ENCODE measurements at regions of chr3 and their contacts with region 1.

Region 1: GRCh38 chr3:86969500-86970189 is 21.3 kb downstream of the VGLL3 start:
- DNase-seq: no peak
- ATAC-seq: no peak
- H3K4me3 ChIP-seq: no peak overlapping the region
- H3K27ac ChIP-seq: no peak overlapping the region
- H3K4me1 ChIP-seq: peaks cover 0 to 4% (median 0%) of the 10 kb centered on the region in 12 donors
- H3K27me3 ChIP-seq: no peaks in the 10 kb centered on the region
- CTCF ChIP-seq: peak; percentile 21 to 57 (median 44)
- POLR2A ChIP-seq: no peak

Region 2: DNA sequence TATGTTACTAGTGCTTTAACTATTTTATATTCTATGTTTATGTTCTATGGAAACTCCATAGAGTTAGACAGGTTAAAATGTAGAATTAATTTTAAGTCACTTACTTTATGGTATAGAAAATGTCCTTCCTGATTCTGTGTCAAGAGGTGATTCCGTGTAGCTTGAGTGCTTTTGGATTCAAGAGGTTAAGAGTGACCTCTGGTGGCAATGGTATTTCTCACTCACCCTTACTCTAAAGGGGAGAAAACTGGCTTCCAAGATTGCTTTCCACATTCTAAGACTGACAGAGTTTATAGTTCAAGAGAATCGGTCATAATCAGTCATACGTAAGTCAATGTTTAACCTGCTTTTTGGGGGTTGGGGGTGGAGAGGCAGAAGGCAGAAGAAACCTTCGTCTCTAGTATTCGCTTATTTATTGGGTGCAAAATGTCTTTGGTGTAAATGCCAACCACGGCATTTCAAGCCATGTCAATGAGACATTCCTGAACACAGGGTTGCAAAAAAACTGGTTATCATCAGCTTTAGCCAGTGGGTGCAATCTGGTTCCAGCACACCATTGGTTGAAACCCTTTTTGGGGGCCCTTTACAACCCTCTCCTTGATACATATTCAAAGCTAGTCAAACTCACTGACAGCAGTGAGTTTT is 113.3 kb after region 1 on chr3:
- intact Hi-C with region 1: loop called in 1 of 10 experiments (anchors 5 kb)
- DNase-seq: no peak
- ATAC-seq: peak in 3 of 4 donors; percentile 57 to 71 (median 58)
- H3K4me3 ChIP-seq: no peak overlapping the region
- H3K27ac ChIP-seq: no peak overlapping the region
- H3K4me1 ChIP-seq: no peaks in the 10 kb centered on the region
- H3K27me3 ChIP-seq: no peaks in the 10 kb centered on the region
- CTCF ChIP-seq: peak; percentile 20 to 64 (median 42)
- POLR2A ChIP-seq: no peak

Region 3: GRCh38 chr3:87167628-87168456 is 198.2 kb after region 1 on chr3:
- intact Hi-C with region 1: loop called in 1 of 10 experiments (anchors 10 kb)
- DNase-seq: no peak
- ATAC-seq: no peak
- H3K4me3 ChIP-seq: peak overlapping the region in 9 of 12 donors; percentile 26 to 46 (median 35)
- H3K27ac ChIP-seq: no peak overlapping the region
- H3K4me1 ChIP-seq: peaks cover 0 to 5% (median 0%) of the 10 kb centered on the region in 12 donors
- H3K27me3 ChIP-seq: peaks cover 0 to 5% (median 0%) of the 10 kb centered on the region in 9 donors
- CTCF ChIP-seq: peak; percentile 40 to 73 (median 62)
- POLR2A ChIP-seq: no peak

Region 4: DNA sequence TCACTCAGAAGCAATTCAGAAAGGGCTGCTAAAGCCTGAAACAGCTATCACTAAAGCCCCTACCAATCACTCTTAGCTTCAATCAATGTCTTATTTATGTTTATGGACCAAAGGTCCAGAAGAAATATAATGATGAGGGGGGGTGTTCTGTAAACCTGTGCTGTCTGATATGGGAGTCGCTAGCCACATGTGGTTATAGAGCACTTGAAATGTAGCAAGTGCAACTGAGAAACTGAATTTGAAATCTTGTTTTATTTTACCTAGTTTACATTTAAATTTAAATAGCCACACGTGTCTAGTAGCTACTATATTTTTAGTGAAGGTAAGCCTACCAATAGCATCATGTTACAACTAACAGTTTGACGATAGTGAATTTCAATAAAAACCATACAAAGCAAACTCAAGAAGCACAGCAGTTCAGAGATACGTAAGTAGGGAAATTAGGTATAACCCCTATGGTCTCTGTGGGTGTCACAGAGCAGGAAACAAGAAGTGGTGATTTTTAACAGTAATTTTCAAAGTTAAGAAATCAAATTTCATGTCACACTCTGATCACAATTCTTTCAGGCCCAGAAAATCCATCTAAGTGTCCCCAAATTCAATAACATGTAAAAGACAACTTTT is 303.2 kb after region 1 on chr3:
- intact Hi-C with region 1: no loop called
- DNase-seq: no peak
- ATAC-seq: no peak
- H3K4me3 ChIP-seq: no peak overlapping the region
- H3K27ac ChIP-seq: no peak overlapping the region
- H3K4me1 ChIP-seq: peaks cover 0 to 9% (median 0%) of the 10 kb centered on the region in 12 donors
- H3K27me3 ChIP-seq: no peaks in the 10 kb centered on the region
- CTCF ChIP-seq: no peak
- POLR2A ChIP-seq: no peak

Measured in heart left ventricle (tissue), 16 donors.